ENCODE measurements at regions of chr1 and their contacts with region 1.

Region 1: DNA sequence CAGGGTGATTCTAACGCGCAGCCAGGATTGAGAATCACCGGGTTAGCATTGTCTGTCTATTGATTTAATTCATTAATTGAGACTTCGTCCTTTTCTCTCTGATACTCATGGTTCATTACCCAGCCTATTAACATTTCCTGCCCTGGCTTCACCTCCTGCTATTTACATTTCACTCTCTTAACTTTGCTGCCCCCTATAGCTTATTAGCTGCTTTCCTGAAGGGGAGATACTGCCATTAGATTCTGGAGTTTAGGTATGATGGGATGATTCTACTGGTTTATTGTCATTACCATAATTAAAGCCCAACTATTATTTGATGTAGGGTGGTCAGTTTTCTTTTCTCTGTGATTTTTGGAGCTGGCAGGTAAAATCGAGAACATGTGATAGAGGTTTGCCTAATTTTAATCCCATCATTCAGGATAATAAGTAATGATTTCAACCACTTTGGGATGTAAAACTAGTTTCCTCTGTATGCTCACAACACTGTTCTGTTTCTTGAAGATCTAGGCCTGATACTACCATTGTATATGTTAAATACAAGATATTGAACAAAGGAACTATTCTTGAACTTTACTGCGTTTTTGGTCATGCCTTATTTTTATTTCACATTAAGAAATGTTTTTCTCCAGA is 6.4 kb downstream of the PPP2R5A start:
- DNase-seq: peak in 3 of 35 experiments; percentile 20 to 76 (median 21)
- ATAC-seq: peak; percentile 67 to 83 (median 76)
- H3K4me3 ChIP-seq: no peak overlapping the region
- H3K4me3 Mint-ChIP-seq: peak overlapping the region; percentile 7 to 99 (median 34)
- H3K27ac ChIP-seq: no peak overlapping the region
- H3K27ac Mint-ChIP-seq: no peak overlapping the region
- H3K4me1 ChIP-seq: peaks cover 11 to 59% of the 10 kb centered on the region in 2 experiments
- H3K4me1 Mint-ChIP-seq: peaks cover 86 to 93% (median 86%) of the 10 kb centered on the region in 3 donors
- H3K27me3 ChIP-seq: no peaks in the 10 kb centered on the region
- H3K27me3 Mint-ChIP-seq: no peaks in the 10 kb centered on the region

Region 2: GRCh38 chr1:212062832-212063438 is 228.7 kb before region 1 on chr1:
- CTCF ChIA-PET with region 1: interaction called, 4 to 14 read pairs
- POLR2A ChIA-PET with region 1: no interaction called
- DNase-seq: peak in 1 of 35 experiments; percentile 52
- ATAC-seq: peak in 3 of 4 experiments; percentile 43 to 54 (median 47)
- H3K4me3 ChIP-seq: no peak overlapping the region
- H3K4me3 Mint-ChIP-seq: no peak overlapping the region
- H3K27ac ChIP-seq: no peak overlapping the region
- H3K27ac Mint-ChIP-seq: no peak overlapping the region
- H3K4me1 ChIP-seq: no peaks in the 10 kb centered on the region
- H3K4me1 Mint-ChIP-seq: no peaks in the 10 kb centered on the region
- H3K27me3 ChIP-seq: no peaks in the 10 kb centered on the region
- H3K27me3 Mint-ChIP-seq: no peaks in the 10 kb centered on the region

Measured in T-cell (primary cell).